Activated T-helper 1 cell treated with anti-CD3 and anti-CD28 coated beads, Interleukin-12 subunit alpha, Interleukin-12 subunit beta, Interleukin-2, Interleukin-4 antibody, amounts not matched to agents 30 ng/mL and 10 ng/mL and 1 ng/mL, durations not matched to agents 14 hours and 24 hours and 36 hours (primary cell): ENCODE measurements at regions of chr15 and their contacts with region 1.

Region 1: GRCh38 chr15:38486936-38487335 is 33.0 kb downstream of the FAM98B start:
- DNase-seq: no peak
- H3K4me3 Mint-ChIP-seq: peak overlapping the region; percentile 17
- H3K27ac Mint-ChIP-seq: peak overlapping the region; percentile 90
- H3K4me1 Mint-ChIP-seq: peaks cover 47% of the 10 kb centered on the region
- H3K27me3 Mint-ChIP-seq: no peaks in the 10 kb centered on the region

Region 2: GRCh38 chr15:38453971-38454695 is 32.8 kb before region 1 on chr15 and contains the start of gene FAM98B:
- intact Hi-C with region 1: loop called (anchors 2 kb)
- DNase-seq: peak; percentile 85
- H3K4me3 Mint-ChIP-seq: peak within 1 kb of the TSS; percentile 96
- H3K27ac Mint-ChIP-seq: peak within 1 kb of the TSS; percentile 95
- H3K4me1 Mint-ChIP-seq: peaks cover 22% of the 10 kb centered on the region
- H3K27me3 Mint-ChIP-seq: peaks cover 19% of the 10 kb centered on the region
- total RNA-seq, gene FAM98B: 64.4 and 66.9 TPM in 2 replicates

Region 3: GRCh38 chr15:38474155-38474757 is 12.7 kb before region 1 on chr15:
- intact Hi-C with region 1: loop called (anchors 2 kb)
- DNase-seq: peak; percentile 29
- H3K4me3 Mint-ChIP-seq: no peak overlapping the region
- H3K27ac Mint-ChIP-seq: peak overlapping the region; percentile 41
- H3K4me1 Mint-ChIP-seq: peaks cover 20% of the 10 kb centered on the region
- H3K27me3 Mint-ChIP-seq: no peaks in the 10 kb centered on the region

Region 4: DNA sequence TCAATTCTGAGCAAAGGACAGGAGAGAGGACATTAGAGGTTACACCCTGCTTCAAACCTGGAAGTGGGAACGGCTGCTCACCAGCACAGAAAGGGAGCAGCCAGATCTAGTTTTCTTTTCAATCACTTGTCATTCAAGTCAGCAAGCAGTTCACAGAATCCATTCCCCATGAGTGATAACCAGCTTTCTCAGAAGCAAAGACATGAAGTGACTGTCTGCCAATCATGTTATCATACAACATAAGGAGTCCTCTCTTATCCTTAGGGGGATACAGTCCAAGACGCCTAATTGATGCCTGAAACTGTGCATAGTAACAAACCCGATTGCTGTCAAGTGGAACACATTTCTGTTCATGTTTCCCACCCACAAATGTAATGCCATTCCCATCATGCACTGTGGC is 21.7 kb after region 1 on chr15:
- intact Hi-C with region 1: loop called (anchors 1 kb)
- DNase-seq: peak; percentile 8
- H3K4me3 Mint-ChIP-seq: no peak overlapping the region
- H3K27ac Mint-ChIP-seq: peak overlapping the region; percentile 91
- H3K4me1 Mint-ChIP-seq: peaks cover 45% of the 10 kb centered on the region
- H3K27me3 Mint-ChIP-seq: no peaks in the 10 kb centered on the region

Region 5: DNA sequence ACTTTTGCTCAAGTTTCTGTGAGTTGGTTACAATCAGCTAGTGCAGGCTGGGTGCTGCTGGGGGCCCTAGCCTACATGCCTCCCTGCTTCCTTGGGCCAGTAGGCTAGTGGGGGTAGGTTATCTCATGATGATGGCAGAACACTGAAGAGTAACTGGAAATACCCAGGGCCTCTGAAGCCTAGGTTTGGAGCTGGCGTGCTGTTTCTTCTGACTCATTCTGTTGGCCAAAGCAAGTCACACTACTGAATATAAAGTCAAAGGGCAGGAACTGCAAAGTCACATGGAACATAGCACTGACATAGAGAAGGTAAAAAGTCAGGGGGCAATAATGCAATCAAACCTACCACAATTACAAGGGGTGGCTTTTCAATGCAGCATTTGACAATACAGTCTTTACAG is 43.2 kb after region 1 on chr15:
- intact Hi-C with region 1: loop called (anchors 5 kb)
- DNase-seq: peak; percentile 16
- H3K4me3 Mint-ChIP-seq: peak overlapping the region; percentile 46
- H3K27ac Mint-ChIP-seq: peak overlapping the region; percentile 85
- H3K4me1 Mint-ChIP-seq: peaks cover 93% of the 10 kb centered on the region
- H3K27me3 Mint-ChIP-seq: no peaks in the 10 kb centered on the region

Region 6: DNA sequence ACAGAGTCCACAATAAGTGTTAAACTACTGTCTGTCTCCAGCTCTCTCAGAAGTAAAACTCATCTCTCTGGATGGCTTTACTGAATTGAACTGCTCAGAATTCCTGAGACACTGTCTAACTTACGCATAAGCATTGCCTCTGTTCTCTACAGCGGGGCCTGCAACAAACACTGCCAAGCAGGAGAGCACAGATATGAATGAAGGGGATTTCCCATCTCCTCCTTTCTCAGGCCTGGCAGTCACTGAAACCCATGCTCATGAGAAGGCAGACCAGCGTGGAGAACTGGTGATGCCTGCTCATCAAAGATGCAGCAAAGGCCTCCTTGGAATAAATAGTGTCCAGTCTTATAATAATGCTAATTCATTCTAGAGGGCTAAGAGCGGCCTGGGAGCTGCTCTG is 67.4 kb after region 1 on chr15:
- intact Hi-C with region 1: loop called (anchors 1 kb)
- DNase-seq: no peak
- H3K4me3 Mint-ChIP-seq: peak overlapping the region; percentile 96
- H3K27ac Mint-ChIP-seq: peak overlapping the region; percentile 93
- H3K4me1 Mint-ChIP-seq: peaks cover 87% of the 10 kb centered on the region
- H3K27me3 Mint-ChIP-seq: no peaks in the 10 kb centered on the region

Region 7: GRCh38 chr15:38642689-38643270 is 155.8 kb after region 1 on chr15:
- intact Hi-C with region 1: no loop called
- DNase-seq: no peak
- H3K4me3 Mint-ChIP-seq: no peak overlapping the region
- H3K27ac Mint-ChIP-seq: no peak overlapping the region
- H3K4me1 Mint-ChIP-seq: peaks cover 57% of the 10 kb centered on the region
- H3K27me3 Mint-ChIP-seq: no peaks in the 10 kb centered on the region